Panc1 (cell line): ENCODE measurements at regions of chr13 and their contacts with region 1.

Region 1: DNA sequence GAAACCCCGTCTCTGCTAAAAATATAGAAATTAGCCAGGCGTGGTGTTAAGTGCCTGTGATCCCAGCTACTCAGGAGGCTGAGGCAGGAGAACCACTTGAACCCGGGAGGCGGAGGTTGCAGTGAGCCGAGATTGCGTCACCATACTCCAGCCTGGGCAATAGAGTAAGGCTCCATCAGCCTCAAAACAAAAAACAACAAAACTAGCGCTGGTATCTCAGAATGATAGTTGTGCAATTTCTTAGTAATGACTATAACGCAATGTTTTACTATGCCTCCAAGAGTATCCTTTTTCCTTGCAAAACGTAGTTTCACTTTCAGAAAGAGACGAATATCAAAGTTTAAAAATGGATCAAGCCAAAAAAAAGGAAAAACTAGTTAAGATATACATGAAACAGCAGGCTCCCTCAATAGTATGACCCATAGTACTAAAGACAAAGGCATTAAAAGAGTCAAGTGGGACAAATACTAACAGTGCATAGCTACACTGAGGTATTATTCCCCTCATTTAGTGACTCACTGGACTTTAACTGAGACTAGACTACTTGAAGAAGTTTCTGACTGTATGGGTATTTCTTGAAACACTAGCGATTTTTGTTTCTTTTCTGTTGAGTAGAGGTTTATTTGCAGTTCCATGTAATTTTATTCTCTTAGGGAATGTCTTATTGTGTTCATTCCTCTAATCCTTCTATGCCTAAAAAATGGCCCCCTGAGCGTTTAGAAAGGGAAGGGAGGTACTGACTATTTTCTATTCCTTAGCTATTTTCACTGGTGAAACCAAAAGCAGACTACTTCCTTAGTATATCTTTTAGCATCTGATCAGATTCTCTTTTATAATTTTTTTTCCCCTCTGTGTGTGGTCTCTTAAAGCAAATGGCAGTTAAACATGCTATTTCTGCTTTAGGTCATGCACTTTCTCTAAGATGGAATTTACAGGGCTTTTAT is 10.4 kb upstream of the ITM2B start:
- DNase-seq: no peak
- ATAC-seq: 0 out of 2 replicates have a peak, but pooled peaks have one; percentile 17
- H3K4me3 ChIP-seq: peak overlapping the region; percentile 29 to 49
- H3K27ac ChIP-seq: peak overlapping the region; percentile 44; the same call in 1 of the 2 replicates
- H3K4me1 ChIP-seq: peaks cover 3% of the 10 kb centered on the region; the same call in 1 of the 2 replicates
- H3K27me3 ChIP-seq: no peaks in the 10 kb centered on the region
- CTCF ChIP-seq: no peak

Region 2: DNA sequence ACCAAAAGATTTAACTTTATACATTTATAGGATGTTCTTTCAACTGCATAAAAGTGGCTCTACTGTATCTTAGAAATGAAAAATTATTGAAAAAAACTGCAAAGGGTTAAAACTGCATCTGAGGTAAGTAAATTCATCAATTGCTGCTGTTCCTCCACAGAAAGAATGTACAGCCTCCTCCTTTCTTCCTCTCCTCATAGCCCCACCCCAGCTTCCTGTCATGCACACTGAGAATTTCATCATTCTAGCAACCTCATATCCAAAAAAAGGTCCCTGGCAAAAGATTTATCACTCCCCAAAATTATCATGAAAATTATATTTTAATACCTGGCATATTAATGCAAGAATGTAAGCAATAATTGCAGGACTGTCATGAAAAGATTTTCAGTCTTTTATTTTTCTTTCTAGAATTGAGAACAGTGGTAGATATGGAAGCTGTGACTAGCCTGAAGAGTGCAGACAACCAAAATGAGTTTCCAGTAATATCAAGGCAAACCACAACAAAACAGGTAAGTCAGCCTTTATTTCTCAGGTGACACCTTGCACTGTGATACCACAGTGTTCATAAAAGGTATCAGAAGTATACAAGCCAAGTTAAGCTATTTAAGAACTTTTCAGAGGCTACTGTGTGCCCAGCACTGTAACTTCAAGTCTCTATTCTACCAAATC is 332.4 kb before region 1 on chr13:
- CTCF ChIA-PET with region 1: no interaction called
- POLR2A ChIA-PET with region 1: interaction called, 12 read pairs
- in situ Hi-C with region 1: no loop called
- intact Hi-C with region 1: no loop called
- DNase-seq: no peak
- ATAC-seq: no peak
- H3K4me3 ChIP-seq: no peak overlapping the region
- H3K27ac ChIP-seq: no peak overlapping the region
- H3K4me1 ChIP-seq: no peaks in the 10 kb centered on the region
- H3K27me3 ChIP-seq: no peaks in the 10 kb centered on the region
- CTCF ChIP-seq: no peak